ENCODE measurements at regions of chr7 and their contacts with region 1.

Region 1: GRCh38 chr7:100745184-100745583 is 11.8 kb downstream of the ZAN start:
- DNase-seq: peak; percentile 78
- CTCF ChIP-seq: no peak

Region 2: GRCh38 chr7:100726996-100727761 is 18.0 kb before region 1 on chr7:
- CTCF ChIA-PET with region 1: interaction called, 35 read pairs
- POLR2A ChIA-PET with region 1: no interaction called
- DNase-seq: no peak
- CTCF ChIP-seq: no peak

Measured in GM10248 (cell line).